ENCODE measurements at regions of chr1 and their contacts with region 1.

Region 1: DNA sequence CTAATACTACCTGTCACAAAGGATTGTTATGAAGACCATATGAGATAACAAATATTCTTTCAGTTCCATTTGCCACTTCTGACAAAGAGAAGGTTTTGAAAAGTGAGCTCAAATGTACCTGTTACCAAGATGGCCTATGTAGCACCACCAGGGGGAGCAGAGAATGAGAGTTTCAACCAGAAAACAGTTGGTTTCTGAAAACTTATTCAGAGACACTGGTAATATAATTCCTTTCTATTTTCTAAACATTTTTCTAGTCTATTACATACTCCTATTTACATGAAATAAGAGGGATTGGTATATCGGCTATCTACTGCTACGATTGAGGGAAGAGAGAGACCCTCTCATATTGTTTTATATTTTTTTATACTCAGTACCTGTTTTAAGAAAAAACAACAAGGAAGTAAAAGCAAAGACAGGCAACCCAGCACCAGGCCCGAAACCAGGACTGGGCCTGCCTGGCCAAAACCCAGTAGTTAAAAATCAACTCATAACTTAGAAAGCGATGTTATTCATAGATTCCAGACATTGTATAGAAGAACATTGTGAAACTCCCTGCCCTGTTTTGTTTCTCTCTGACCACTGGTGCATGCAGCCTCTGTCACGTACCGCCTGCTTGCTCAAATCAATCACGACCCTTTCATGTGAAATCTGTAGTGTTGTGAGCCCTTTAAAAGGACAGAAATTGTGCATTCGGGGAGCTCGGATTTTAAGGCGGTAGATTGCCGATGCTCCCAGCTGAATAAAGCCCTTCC is 48.3 kb downstream of the IL23R start:
- DNase-seq: peak; percentile 45 to 73 (median 66)
- H3K4me3 ChIP-seq: no peak overlapping the region
- H3K27ac ChIP-seq: no peak overlapping the region
- H3K4me1 ChIP-seq: no peaks in the 10 kb centered on the region
- H3K27me3 ChIP-seq: no peaks in the 10 kb centered on the region

Region 2: GRCh38 chr1:66889030-66889429 is 325.6 kb before region 1 on chr1:
- CTCF ChIA-PET with region 1: no interaction called
- POLR2A ChIA-PET with region 1: no interaction called
- DNase-seq: no peak
- H3K4me3 ChIP-seq: no peak overlapping the region
- H3K27ac ChIP-seq: no peak overlapping the region
- H3K4me1 ChIP-seq: peaks cover 0 to 2% (median 0%) of the 10 kb centered on the region in 4 experiments
- H3K27me3 ChIP-seq: no peaks in the 10 kb centered on the region

Region 3: GRCh38 chr1:66996018-66996682 is 218.4 kb before region 1 on chr1:
- CTCF ChIA-PET with region 1: interaction called, 34 read pairs
- POLR2A ChIA-PET with region 1: no interaction called
- DNase-seq: peak; percentile 87 to 94 (median 93)
- H3K4me3 ChIP-seq: peak overlapping the region in 2 of 7 experiments; percentile 16 to 67
- H3K27ac ChIP-seq: no peak overlapping the region
- H3K4me1 ChIP-seq: peaks cover 7 to 22% (median 12%) of the 10 kb centered on the region in 4 experiments
- H3K27me3 ChIP-seq: no peaks in the 10 kb centered on the region

Region 4: GRCh38 chr1:67134695-67135094 is 79.9 kb before region 1 on chr1 and contains the start of gene C1orf141:
- CTCF ChIA-PET with region 1: interaction called, 12 read pairs
- POLR2A ChIA-PET with region 1: no interaction called
- DNase-seq: peak; percentile 34 to 68 (median 53)
- H3K4me3 ChIP-seq: peak within 1 kb of the TSS in 5 of 7 experiments; percentile 25 to 78 (median 57)
- H3K27ac ChIP-seq: no peak within 1 kb of the TSS
- H3K4me1 ChIP-seq: peaks cover 0 to 11% (median 7%) of the 10 kb centered on the region in 4 experiments
- H3K27me3 ChIP-seq: no peaks in the 10 kb centered on the region

Region 5: DNA sequence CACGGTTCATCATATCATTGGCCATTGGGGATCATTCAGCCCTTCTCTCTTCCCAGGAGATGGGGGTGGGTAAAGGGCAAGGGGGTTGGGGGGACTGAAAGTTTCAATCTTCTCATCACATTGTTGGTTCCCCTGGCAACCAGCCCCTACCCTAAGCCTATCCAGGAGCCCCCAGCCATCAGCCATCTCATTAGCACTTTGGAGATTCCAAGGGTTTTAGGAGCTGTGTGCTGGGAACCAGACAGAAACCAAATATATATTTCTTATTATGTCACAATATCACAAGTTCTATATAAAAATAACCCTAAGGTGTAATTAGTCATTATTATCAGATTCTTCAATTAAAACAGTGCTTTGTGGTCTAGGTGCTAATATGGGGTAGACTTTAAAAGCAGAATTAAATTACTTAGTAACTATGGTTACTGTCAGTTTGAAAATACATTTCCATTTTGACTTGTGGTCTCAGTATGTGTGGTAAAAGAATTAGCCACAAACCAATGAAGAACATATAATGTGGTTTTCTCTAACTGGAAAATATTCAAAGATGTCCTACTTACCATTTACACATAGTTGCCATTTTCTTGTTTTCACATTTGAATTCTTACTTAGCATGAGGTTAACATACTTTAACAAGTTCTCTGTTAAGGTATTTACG is 20.3 kb before region 1 on chr1:
- CTCF ChIA-PET with region 1: interaction called, 23 read pairs
- POLR2A ChIA-PET with region 1: no interaction called
- DNase-seq: peak; percentile 40 to 87 (median 83)
- H3K4me3 ChIP-seq: no peak overlapping the region
- H3K27ac ChIP-seq: no peak overlapping the region
- H3K4me1 ChIP-seq: peaks cover 0 to 7% (median 2%) of the 10 kb centered on the region in 4 experiments
- H3K27me3 ChIP-seq: peaks cover 0 to 37% (median 23%) of the 10 kb centered on the region in 5 experiments

Region 6: GRCh38 chr1:67227196-67227595 is 12.6 kb after region 1 on chr1:
- CTCF ChIA-PET with region 1: interaction called, 57 read pairs
- POLR2A ChIA-PET with region 1: no interaction called
- DNase-seq: no peak
- H3K4me3 ChIP-seq: no peak overlapping the region
- H3K27ac ChIP-seq: no peak overlapping the region
- H3K4me1 ChIP-seq: no peaks in the 10 kb centered on the region
- H3K27me3 ChIP-seq: no peaks in the 10 kb centered on the region

Region 7: GRCh38 chr1:67500413-67500959 is 285.9 kb after region 1 on chr1:
- CTCF ChIA-PET with region 1: interaction called, 58 read pairs
- POLR2A ChIA-PET with region 1: no interaction called
- DNase-seq: peak; percentile 83 to 94 (median 91)
- H3K4me3 ChIP-seq: peak overlapping the region in 1 of 7 experiments; percentile 27
- H3K27ac ChIP-seq: no peak overlapping the region
- H3K4me1 ChIP-seq: peaks cover 0 to 4% (median 1%) of the 10 kb centered on the region in 4 experiments
- H3K27me3 ChIP-seq: no peaks in the 10 kb centered on the region

Region 8: GRCh38 chr1:67570473-67571143 is 356.0 kb after region 1 on chr1:
- CTCF ChIA-PET with region 1: no interaction called
- POLR2A ChIA-PET with region 1: no interaction called
- DNase-seq: no peak
- H3K4me3 ChIP-seq: no peak overlapping the region
- H3K27ac ChIP-seq: no peak overlapping the region
- H3K4me1 ChIP-seq: no peaks in the 10 kb centered on the region
- H3K27me3 ChIP-seq: no peaks in the 10 kb centered on the region